PC-3 (cell line): ENCODE measurements at regions of chr20 and their contacts with region 1.

Region 1: GRCh38 chr20:36199345-36200257 is 36.7 kb upstream of the AAR2 start:
- DNase-seq: peak; percentile 88
- ATAC-seq: peak; percentile 90
- H3K4me3 ChIP-seq: no peak overlapping the region
- H3K27ac ChIP-seq: no peak overlapping the region
- H3K4me1 ChIP-seq: no peaks in the 10 kb centered on the region
- H3K27me3 ChIP-seq: no peaks in the 10 kb centered on the region
- CTCF ChIP-seq: peak; percentile 90

Region 2: DNA sequence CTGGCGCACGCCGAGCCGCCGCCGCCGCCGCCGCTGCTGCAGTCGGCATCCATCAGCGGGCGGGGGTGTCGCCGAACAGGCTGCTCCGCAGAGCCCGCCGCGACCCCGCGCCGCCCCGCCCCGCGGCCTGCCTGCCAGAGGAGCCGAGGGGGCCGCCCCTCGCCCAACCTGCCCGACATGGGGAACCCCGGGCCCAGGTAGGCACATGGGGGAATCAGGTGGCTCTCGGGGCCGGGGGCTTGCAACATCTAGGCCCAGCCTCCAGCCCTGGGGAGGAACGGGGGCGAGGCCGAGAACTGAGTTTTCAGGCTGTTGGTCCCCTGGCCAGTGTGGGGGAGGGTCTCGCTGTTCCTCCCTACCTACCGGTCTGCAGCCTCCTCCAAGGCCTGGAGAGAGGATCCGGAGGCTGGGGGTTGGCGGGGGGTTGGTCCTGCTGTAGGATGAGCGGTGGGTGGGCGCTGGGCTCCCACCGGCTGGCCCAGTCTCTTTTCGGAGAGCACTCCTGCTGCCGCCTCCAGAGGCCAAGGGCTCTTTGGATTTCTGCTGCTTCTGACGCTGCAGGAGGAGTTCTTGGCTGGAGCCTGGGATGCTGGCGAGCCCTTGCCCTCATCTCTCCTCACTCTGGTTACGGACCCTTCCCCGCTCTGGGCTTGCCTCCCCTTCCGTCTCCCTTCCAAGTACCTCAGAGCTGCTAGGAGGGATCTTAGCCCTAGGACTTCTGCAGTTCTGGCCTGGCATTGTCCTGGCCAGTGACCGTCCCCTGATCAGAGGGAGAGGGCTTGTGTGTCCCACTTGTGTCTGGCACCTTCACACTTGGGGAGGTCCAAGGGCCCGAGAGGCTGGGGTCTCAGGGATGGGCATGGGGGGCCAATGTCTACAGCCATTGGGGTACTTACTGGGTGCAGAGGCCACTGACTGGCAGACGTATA is 44.6 kb before region 1 on chr20 and contains the start of gene EPB41L1:
- CTCF ChIA-PET with region 1: interaction called, 10 read pairs
- POLR2A ChIA-PET with region 1: no interaction called
- intact Hi-C with region 1: loop called (anchors 1 kb)
- DNase-seq: peak; percentile 11
- ATAC-seq: peak; percentile 15
- H3K4me3 ChIP-seq: peak within 1 kb of the TSS; percentile 87
- H3K27ac ChIP-seq: no peak within 1 kb of the TSS
- H3K4me1 ChIP-seq: peaks cover 17% of the 10 kb centered on the region
- H3K27me3 ChIP-seq: no peaks in the 10 kb centered on the region
- CTCF ChIP-seq: no peak
- total RNA-seq, gene EPB41L1: 48.2 and 53.0 TPM in 2 replicates

Region 3: GRCh38 chr20:36377352-36378326 is 178.0 kb after region 1 on chr20:
- CTCF ChIA-PET with region 1: no interaction called
- POLR2A ChIA-PET with region 1: no interaction called
- intact Hi-C with region 1: no loop called
- DNase-seq: no peak
- ATAC-seq: no peak
- H3K4me3 ChIP-seq: no peak overlapping the region
- H3K27ac ChIP-seq: no peak overlapping the region
- H3K4me1 ChIP-seq: no peaks in the 10 kb centered on the region
- H3K27me3 ChIP-seq: peaks cover 57% of the 10 kb centered on the region
- CTCF ChIP-seq: no peak